ENCODE measurements at regions of chr7 and their contacts with region 1.

Region 1: DNA sequence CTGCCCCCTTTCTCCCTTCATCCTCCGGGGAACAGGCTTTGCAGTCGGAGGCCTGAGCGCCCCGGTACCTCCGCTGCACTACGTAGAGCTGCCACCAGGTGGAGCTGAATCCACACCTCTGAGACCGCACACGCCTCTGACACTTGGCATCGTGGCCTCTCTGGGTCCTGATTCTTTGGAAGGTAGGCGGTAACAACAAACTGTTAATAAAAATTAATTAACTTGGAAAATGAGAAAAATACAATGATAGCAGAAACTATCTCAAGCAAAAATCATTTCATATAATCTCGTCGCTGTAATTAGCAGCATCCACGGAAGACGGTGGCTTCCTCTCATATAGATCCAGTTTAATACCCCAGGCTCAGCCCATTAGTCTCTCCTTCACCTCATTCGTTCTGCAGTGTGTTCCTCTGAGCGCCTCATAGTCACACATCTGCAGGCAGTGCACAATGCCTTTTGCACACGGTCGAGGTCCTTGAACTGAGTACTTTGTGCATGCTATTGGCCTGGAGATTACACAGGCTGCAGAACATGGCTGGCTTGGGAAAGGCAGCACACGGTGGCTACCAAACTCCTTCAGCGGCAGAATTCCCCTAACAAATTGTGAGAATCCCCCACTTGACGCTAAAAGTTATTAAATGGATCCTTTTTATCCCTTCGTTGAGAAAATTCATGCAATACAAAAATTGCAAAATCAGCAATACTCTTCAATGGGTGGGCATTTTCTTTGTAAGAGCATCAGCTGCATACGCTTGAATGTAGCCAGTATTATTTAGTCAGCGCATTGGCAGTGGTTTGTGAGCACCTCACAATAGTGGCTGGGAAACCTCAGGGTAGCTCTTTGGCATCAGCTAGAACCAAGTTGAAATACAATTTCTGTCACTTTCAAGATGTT is 18.7 kb downstream of the OR9A2 start:
- DNase-seq: peak; percentile 71 to 85
- H3K4me3 ChIP-seq: no peak overlapping the region
- H3K4me3 Mint-ChIP-seq: no peak overlapping the region
- H3K27ac Mint-ChIP-seq: no peak overlapping the region
- H3K4me1 ChIP-seq: 0 out of 2 replicates have a peak, but pooled peaks cover 2% of the 10 kb centered on the region
- H3K4me1 Mint-ChIP-seq: peaks cover 4% of the 10 kb centered on the region
- H3K27me3 ChIP-seq: no peaks in the 10 kb centered on the region
- H3K27me3 Mint-ChIP-seq: peaks cover 14% of the 10 kb centered on the region
- CTCF ChIP-seq: peak; percentile 97 to 98

Region 2: GRCh38 chr7:142603870-142604448 is 404.3 kb before region 1 on chr7:
- CTCF ChIA-PET with region 1: no interaction called
- POLR2A ChIA-PET with region 1: no interaction called
- intact Hi-C with region 1: loop called (anchors 1 kb)
- DNase-seq: peak; percentile 52 to 65
- H3K4me3 ChIP-seq: no peak overlapping the region
- H3K4me3 Mint-ChIP-seq: no peak overlapping the region
- H3K27ac Mint-ChIP-seq: no peak overlapping the region
- H3K4me1 ChIP-seq: no peaks in the 10 kb centered on the region
- H3K4me1 Mint-ChIP-seq: peaks cover 6% of the 10 kb centered on the region
- H3K27me3 ChIP-seq: no peaks in the 10 kb centered on the region
- H3K27me3 Mint-ChIP-seq: peaks cover 23% of the 10 kb centered on the region
- CTCF ChIP-seq: peak; percentile 79 to 93

Region 3: DNA sequence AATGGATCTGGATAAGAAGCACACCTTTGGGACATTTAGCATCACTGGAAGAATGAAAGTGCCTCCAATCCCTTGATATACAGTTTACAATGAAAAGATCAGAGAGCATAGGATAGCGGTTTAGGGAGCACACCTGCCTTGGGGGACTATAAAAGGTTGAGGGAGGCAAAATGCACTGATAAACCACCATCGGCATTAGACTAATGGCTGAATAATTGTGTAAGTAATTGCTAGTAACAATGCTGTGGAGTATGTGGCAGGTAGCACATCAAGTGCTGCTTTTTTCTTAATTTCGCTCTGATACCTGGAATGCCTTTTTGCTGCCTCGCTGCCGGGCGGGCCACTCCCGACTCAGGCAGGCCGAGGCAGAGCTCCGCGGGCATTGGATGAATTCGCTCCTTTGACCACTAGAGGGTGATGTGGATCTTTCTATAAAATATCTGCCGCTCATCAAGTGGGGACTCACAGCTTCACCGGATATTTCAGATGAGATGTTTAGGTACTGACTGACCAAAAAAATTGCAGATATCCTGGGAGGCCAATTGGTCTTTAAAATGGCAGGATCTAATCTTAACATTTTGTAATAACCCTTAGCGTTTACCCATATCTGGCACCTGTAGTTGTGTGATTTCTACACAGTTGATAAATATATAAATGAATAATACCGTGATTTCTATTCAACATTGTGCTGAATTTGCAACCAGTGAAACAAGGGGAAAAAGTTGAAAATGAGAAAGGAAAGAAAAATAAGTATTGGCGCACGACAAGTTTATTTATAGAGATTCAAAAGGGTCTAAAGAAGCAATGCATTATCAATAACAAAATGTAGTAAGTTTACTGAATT is 375.7 kb before region 1 on chr7:
- CTCF ChIA-PET with region 1: interaction called, 3 read pairs
- POLR2A ChIA-PET with region 1: no interaction called
- intact Hi-C with region 1: loop called (anchors 10 kb)
- DNase-seq: peak; percentile 48 to 76
- H3K4me3 ChIP-seq: no peak overlapping the region
- H3K4me3 Mint-ChIP-seq: no peak overlapping the region
- H3K27ac Mint-ChIP-seq: no peak overlapping the region
- H3K4me1 ChIP-seq: no peaks in the 10 kb centered on the region
- H3K4me1 Mint-ChIP-seq: no peaks in the 10 kb centered on the region
- H3K27me3 ChIP-seq: peaks cover 1% of the 10 kb centered on the region
- H3K27me3 Mint-ChIP-seq: peaks cover 20% of the 10 kb centered on the region
- CTCF ChIP-seq: peak; percentile 72 to 74

Region 4: GRCh38 chr7:142853739-142854371 is 154.4 kb before region 1 on chr7:
- CTCF ChIA-PET with region 1: interaction called, 6 read pairs
- POLR2A ChIA-PET with region 1: no interaction called
- intact Hi-C with region 1: loop called (anchors 1 kb)
- DNase-seq: peak; percentile 64 to 75
- H3K4me3 ChIP-seq: peak overlapping the region; percentile 76
- H3K4me3 Mint-ChIP-seq: peak overlapping the region; percentile 91
- H3K27ac Mint-ChIP-seq: peak overlapping the region; percentile 47
- H3K4me1 ChIP-seq: peaks cover 6% of the 10 kb centered on the region; the same call in 1 of the 2 replicates
- H3K4me1 Mint-ChIP-seq: peaks cover 7% of the 10 kb centered on the region
- H3K27me3 ChIP-seq: no peaks in the 10 kb centered on the region; the same call in none of the 2 replicates
- H3K27me3 Mint-ChIP-seq: peaks cover 14% of the 10 kb centered on the region
- CTCF ChIP-seq: peak; percentile 83 to 85

Region 5: DNA sequence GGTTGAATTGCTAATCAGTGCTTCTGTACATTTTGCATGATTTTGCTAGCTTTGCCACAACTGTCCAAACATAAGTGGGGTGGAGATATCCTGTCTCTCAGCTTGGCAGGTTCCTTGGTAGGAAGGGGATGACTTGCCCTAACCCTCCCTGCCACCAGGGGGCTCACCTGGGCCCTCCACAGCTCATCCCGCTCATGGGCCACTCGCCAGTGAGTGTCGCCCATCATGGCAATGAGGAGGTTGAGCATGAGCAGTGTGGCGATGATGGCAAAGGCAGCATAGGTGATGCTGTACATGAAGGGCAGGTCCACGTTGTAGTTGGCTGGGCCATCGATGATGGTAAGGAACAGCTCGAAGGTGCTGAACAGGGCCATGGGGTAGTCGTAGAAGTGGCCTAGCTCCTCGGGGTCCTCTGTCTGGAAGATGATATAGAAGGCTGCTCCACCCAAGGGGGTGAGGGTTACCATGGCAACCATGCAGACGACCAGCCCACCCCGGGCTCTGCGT is 134.9 kb before region 1 on chr7:
- CTCF ChIA-PET with region 1: interaction called, 16 read pairs
- POLR2A ChIA-PET with region 1: no interaction called
- intact Hi-C with region 1: no loop called
- DNase-seq: peak; percentile 44 to 60
- H3K4me3 ChIP-seq: no peak overlapping the region
- H3K4me3 Mint-ChIP-seq: no peak overlapping the region
- H3K27ac Mint-ChIP-seq: no peak overlapping the region
- H3K4me1 ChIP-seq: no peaks in the 10 kb centered on the region
- H3K4me1 Mint-ChIP-seq: no peaks in the 10 kb centered on the region
- H3K27me3 ChIP-seq: no peaks in the 10 kb centered on the region
- H3K27me3 Mint-ChIP-seq: no peaks in the 10 kb centered on the region
- CTCF ChIP-seq: peak; percentile 59 to 64

Region 6: DNA sequence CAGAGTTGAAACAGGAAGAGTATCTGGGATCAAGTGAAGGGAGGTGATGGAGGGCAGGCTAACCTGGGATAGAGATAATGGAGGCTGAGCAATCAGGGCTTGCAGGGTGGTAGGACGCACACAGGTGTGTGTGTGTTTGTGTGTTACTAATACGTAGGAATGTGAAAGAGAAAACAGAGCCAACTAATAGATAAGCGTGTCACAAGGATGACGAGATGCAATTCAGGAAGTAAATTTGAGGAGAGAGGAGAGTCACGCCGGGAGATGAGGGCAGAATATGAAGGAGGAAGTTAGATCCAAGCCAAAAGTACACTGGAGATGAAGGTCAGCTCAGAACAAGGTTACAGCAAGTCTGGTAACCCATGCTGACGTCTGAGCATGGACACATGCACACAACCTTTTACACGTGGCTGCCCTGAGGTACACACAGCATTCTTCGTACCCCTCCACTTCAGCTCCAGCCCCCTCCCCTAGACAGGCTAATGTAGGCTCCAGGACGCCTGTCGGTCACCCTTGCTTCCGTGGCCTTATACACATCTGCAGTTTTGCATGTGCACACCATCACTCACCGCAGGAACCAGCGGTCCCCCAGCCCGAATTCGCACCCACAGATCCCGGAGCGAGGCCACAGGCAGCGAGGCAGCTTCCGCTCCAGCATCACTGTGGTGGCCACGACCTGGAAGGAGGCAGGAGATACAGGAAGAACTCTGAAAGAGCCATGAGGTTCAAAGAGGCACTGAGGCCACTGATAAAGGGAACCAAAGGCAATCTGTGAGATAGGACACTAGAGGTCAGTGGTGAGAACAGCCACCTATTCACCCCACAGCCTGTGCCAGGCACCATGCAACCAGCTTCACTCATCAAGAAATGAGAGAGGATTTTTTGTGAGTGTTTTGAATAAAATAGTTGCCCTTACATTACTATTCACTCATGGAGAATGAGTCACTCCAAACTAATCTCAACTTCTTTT is 99.0 kb before region 1 on chr7:
- CTCF ChIA-PET with region 1: no interaction called
- POLR2A ChIA-PET with region 1: no interaction called
- intact Hi-C with region 1: loop called (anchors 1 kb)
- DNase-seq: no peak
- H3K4me3 ChIP-seq: no peak overlapping the region
- H3K4me3 Mint-ChIP-seq: no peak overlapping the region
- H3K27ac Mint-ChIP-seq: peak overlapping the region; percentile 7
- H3K4me1 ChIP-seq: peaks cover 49% of the 10 kb centered on the region
- H3K4me1 Mint-ChIP-seq: peaks cover 56% of the 10 kb centered on the region
- H3K27me3 ChIP-seq: no peaks in the 10 kb centered on the region
- H3K27me3 Mint-ChIP-seq: no peaks in the 10 kb centered on the region
- CTCF ChIP-seq: peak; percentile 28 to 33

Region 7: DNA sequence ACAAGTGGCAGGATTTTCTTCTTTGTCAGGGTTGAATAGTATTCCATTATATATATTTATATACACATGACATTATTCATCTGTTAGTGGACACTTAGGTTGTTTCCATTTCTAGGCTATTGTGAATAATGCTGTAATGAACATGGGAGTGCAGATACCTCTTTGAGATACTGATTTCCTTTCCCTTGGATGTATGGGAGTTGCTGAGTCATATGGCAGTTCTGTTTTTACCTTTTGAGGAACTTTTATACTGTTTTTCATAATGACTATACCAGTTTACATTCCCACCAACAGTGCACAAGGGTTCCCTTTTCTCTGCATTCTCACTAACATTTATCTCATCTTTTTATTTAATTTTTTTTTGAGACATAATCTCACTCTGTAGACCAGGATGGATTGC is 305.9 kb after region 1 on chr7:
- CTCF ChIA-PET with region 1: no interaction called
- POLR2A ChIA-PET with region 1: no interaction called
- intact Hi-C with region 1: no loop called
- DNase-seq: no peak
- H3K4me3 ChIP-seq: no peak overlapping the region
- H3K4me3 Mint-ChIP-seq: no peak overlapping the region
- H3K27ac Mint-ChIP-seq: no peak overlapping the region
- H3K4me1 ChIP-seq: peaks cover 14% of the 10 kb centered on the region
- H3K4me1 Mint-ChIP-seq: peaks cover 22% of the 10 kb centered on the region
- H3K27me3 ChIP-seq: no peaks in the 10 kb centered on the region
- H3K27me3 Mint-ChIP-seq: no peaks in the 10 kb centered on the region
- CTCF ChIP-seq: no peak